Right ventricle myocardium inferior (tissue), 1 donor: ENCODE measurements at regions of chr9 and their contacts with region 1.

Region 1: GRCh38 chr9:127122176-127123063 is at the start of gene ANGPTL2:
- DNase-seq: peak; percentile 94
- ATAC-seq: peak; percentile 96
- total RNA-seq, gene ANGPTL2: 37.1 TPM

Region 2: GRCh38 chr9:126965541-126966428 is 156.6 kb before region 1 on chr9:
- intact Hi-C with region 1: loop called (anchors 5 kb)
- DNase-seq: no peak
- ATAC-seq: peak; percentile 79

Region 3: DNA sequence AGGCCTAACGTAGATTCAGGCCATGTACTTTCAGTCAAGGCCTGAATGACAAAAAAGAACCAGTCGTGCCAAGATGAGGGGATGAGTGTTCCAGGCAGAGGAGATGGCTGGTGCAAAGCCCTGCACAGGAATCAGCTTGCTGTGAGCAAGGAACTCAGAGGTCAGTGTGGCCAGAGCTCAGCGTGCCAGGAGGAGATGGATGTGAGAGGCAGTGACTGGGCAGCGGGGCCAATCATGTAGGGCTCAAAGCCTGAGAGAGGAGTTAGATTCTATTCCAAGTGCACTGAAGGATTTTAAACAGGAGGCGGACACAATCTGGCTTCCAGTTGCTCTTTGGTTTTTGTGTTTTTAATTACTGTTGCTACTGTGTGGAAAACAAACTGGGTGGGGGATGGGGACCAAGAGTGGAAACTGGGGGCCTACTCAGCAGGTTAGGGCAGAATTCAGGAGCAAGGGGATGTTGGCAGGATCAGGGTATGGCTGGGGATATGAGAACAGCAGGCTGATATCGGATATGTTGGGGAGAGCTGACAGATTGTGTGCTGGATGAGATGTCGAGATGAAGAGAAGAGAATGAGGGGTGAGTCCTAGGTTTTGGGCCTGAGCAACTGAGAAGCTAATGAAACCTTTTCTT is 64.3 kb before region 1 on chr9:
- intact Hi-C with region 1: loop called (anchors 5 kb)
- DNase-seq: peak; percentile 68
- ATAC-seq: peak; percentile 35

Region 4: DNA sequence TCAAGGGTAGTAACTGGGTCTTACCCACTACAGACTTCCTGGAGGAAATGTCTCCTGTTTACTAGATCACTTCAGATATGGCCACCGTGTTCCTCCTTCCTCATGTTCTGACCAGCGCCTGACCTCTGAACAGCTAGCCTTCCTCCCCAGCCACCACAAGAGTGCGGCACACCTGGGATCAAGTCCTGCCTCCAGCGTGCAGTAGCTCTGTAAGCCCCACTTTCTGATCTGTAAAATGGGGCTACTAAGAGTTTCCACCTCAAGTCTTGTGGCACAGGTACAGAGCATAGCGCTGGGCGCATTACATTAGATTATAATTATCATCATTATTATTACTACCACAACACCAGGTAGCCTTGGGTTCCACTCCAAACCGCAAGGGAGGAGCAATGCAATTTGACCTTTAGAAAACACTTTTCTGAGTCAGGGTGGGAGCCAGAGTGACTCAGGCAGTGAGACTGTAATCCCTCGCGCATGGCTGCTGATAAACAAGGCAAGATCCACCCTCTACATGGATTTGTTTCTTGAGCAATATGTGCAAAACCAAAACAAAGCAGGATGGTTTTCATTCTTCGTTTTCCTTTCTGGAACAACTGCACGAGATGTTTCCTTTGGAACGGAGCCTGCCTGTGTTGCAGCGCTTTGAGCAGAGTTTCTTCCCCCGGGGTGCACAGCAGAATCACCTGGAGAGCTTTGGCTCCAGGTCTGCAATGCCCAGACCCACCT is 65.0 kb after region 1 on chr9:
- intact Hi-C with region 1: loop called (anchors 5 kb)
- DNase-seq: no peak
- ATAC-seq: peak; percentile 67